ENCODE measurements at regions of chr2 and their contacts with region 1.

Region 1: DNA sequence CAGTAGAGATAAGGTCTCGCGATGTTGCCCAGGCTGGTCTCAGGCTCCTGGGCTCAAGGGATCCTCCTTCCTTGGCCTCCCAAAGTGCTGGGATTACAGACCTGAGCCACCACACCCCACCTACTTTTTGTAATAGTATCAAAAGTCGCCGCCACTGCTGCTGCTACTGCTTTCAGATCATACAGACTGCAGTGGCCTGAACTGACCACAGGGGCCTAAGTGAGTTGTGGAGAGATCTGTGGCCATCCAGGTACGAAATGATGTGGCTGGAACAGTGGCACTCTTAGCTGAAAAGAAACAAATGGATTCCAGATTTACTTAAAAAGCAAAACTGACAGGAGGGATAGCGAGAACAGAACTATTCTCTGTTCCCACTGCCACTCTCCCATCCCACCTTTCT is 32.9 kb upstream of the POMC start:
- DNase-seq: no peak
- H3K4me3 ChIP-seq: no peak overlapping the region
- H3K4me3 Mint-ChIP-seq: no peak overlapping the region
- H3K27ac ChIP-seq: no peak overlapping the region
- H3K27ac Mint-ChIP-seq: peak overlapping the region in 1 of 7 donors; percentile 37
- H3K4me1 ChIP-seq: peaks cover 9% of the 10 kb centered on the region
- H3K4me1 Mint-ChIP-seq: peaks cover 2 to 19% (median 8%) of the 10 kb centered on the region in 4 donors
- H3K27me3 ChIP-seq: no peaks in the 10 kb centered on the region
- H3K27me3 Mint-ChIP-seq: peaks cover 0 to 3% of the 10 kb centered on the region in 2 donors

Region 2: GRCh38 chr2:25131567-25132298 is 69.5 kb before region 1 on chr2:
- CTCF ChIA-PET with region 1: no interaction called
- POLR2A ChIA-PET with region 1: no interaction called
- intact Hi-C with region 1: loop called (anchors 2 kb)
- DNase-seq: no peak
- H3K4me3 ChIP-seq: no peak overlapping the region
- H3K4me3 Mint-ChIP-seq: peak overlapping the region; percentile 12 to 81 (median 66)
- H3K27ac ChIP-seq: no peak overlapping the region
- H3K27ac Mint-ChIP-seq: peak overlapping the region in 1 of 7 donors; percentile 38
- H3K4me1 ChIP-seq: no peaks in the 10 kb centered on the region
- H3K4me1 Mint-ChIP-seq: peaks cover 3 to 16% (median 9%) of the 10 kb centered on the region in 4 donors
- H3K27me3 ChIP-seq: peaks cover 37% of the 10 kb centered on the region
- H3K27me3 Mint-ChIP-seq: peaks cover 29 to 44% of the 10 kb centered on the region in 2 donors

Region 3: DNA sequence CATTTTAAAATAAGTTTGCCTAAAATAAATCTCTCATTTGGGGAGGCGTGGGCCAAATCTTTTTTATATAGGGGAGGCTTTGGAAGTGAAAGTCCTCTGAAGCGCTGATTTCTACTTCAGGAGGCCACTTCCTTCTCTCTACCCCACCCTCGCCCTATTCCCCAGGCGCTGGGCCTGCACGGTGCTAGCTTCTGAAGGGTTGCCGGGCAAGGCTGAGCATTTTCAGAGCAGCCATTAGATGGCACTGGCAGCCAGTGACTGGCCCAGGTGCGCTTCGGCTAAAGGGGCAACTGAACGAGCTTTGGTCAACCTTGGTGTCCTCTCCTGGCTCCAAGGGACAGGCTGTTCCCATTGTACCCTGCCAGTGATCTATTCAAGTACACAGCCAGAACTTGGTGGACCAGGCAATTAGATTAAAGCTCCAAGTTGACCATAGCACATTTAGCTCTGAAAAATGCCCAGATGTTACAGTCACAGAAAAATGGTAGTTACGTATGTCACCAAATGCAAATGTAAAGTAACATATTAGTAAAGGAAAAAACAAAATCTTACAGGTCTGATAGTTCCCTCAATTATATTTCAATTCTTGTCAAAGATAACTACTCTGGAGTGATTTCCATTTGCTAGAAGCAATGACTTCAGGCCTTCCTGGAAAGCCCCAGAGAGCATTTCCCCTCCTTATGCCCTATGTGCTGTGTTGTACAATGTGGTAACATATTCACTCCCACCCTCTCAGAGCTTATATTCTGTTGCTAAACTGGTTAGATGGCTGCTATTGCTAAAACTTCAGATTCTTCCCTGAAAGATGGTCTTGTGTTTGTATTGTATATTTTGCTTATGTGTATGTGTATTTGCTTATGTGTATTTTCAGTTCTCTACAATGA is 35.0 kb before region 1 on chr2:
- CTCF ChIA-PET with region 1: interaction called, 34 read pairs
- POLR2A ChIA-PET with region 1: no interaction called
- intact Hi-C with region 1: loop called (anchors 1 kb)
- DNase-seq: peak; percentile 20 to 35 (median 29)
- H3K4me3 ChIP-seq: no peak overlapping the region
- H3K4me3 Mint-ChIP-seq: peak overlapping the region in 4 of 8 donors; percentile 9 to 87 (median 57)
- H3K27ac ChIP-seq: no peak overlapping the region
- H3K27ac Mint-ChIP-seq: no peak overlapping the region
- H3K4me1 ChIP-seq: peaks cover 13% of the 10 kb centered on the region
- H3K4me1 Mint-ChIP-seq: peaks cover 9 to 33% (median 17%) of the 10 kb centered on the region in 4 donors
- H3K27me3 ChIP-seq: peaks cover 20% of the 10 kb centered on the region
- H3K27me3 Mint-ChIP-seq: peaks cover 21 to 22% of the 10 kb centered on the region in 2 donors